ENCODE measurements at regions of chr7 and their contacts with region 1.

Region 1: GRCh38 chr7:113912876-113913275 is 5.9 kb downstream of the PPP1R3A start:
- DNase-seq: peak; percentile 34 to 79
- ATAC-seq: peak; percentile 88 to 94 (median 94)
- H3K4me3 ChIP-seq: peak overlapping the region; percentile 68
- H3K27ac ChIP-seq: peak overlapping the region; percentile 86
- H3K4me1 ChIP-seq: peaks cover 27% of the 10 kb centered on the region
- H3K27me3 ChIP-seq: no peaks in the 10 kb centered on the region
- CTCF ChIP-seq: no peak

Region 2: GRCh38 chr7:113875224-113875623 is 37.7 kb before region 1 on chr7:
- intact Hi-C with region 1: loop called in 1 of 2 experiments (anchors 5 kb)
- DNase-seq: no peak
- ATAC-seq: peak in 3 of 4 donors; percentile 30 to 40 (median 35)
- H3K4me3 ChIP-seq: no peak overlapping the region
- H3K27ac ChIP-seq: peak overlapping the region; percentile 85
- H3K4me1 ChIP-seq: peaks cover 15% of the 10 kb centered on the region
- H3K27me3 ChIP-seq: no peaks in the 10 kb centered on the region
- CTCF ChIP-seq: no peak

Region 3: GRCh38 chr7:113891828-113892227 is 21.0 kb before region 1 on chr7:
- intact Hi-C with region 1: loop called in 1 of 2 experiments (anchors 2 kb)
- DNase-seq: no peak
- ATAC-seq: peak in 3 of 4 donors; percentile 38 to 55 (median 52)
- H3K4me3 ChIP-seq: no peak overlapping the region
- H3K27ac ChIP-seq: peak overlapping the region; percentile 59
- H3K4me1 ChIP-seq: peaks cover 49% of the 10 kb centered on the region
- H3K27me3 ChIP-seq: no peaks in the 10 kb centered on the region
- CTCF ChIP-seq: no peak